Esophagus muscularis mucosa (tissue), 4 donors: ENCODE measurements at regions of chr20 and their contacts with region 1.

Region 1: DNA sequence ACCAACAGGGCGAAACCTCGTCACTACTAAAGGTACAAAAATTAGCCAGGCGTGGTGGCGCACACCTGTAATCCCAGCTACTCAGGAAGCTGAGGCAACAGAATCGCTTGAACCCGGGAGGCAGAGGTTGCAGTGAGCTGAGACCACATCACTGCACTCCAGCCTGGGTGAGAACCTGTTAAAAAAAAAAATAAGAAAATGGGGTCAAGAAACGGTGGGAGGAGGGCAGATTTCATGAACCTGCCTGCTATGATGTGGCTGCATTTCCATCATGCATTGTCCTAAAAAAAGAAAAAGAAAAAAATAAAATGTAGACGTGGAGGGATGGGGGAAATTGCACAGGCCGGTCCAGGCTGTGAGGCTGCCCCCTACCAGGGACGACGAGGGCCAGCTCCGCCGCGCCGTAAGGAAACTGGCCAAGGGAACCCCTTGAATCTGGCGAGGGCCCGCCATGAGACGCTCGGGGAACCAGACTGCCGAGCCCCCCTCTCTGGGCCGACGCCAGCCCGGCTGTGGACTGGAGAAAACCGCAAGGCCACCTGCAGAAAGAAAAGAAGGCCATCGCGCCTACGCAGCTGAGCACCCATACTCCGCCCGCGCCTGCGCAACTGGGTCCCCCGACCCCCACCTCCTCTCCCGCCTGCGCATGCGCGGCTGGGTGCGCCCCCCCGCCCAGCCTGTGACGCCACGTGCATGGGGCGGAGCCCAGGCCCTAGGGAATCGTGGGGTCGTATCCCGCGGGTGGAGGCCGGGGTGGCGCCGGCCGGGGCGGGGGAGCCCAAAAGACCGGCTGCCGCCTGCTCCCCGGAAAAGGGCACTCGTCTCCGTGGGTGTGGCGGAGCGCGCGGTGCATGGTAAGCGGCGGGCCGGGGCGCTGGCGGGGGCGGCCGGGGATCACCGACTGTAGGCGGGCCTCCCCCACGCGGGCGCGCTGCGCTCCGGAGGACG is at the start of gene ENTPD6:
- DNase-seq: peak; percentile 97
- H3K4me3 ChIP-seq: peak within 1 kb of the TSS; percentile 79 to 95 (median 94)
- H3K27ac ChIP-seq: peak within 1 kb of the TSS; percentile 84 to 94 (median 89)
- H3K4me1 ChIP-seq: peaks cover 39 to 55% (median 50%) of the 10 kb centered on the region in 4 donors
- H3K27me3 ChIP-seq: no peaks in the 10 kb centered on the region
- CTCF ChIP-seq: peak in 2 of 3 experiments; percentile 29 to 42
- EP300 ChIP-seq: no peak
- POLR2A ChIP-seq: peak; percentile 64
- total RNA-seq, gene ENTPD6: 39.0 to 44.1 (median 43.5) TPM

Region 2: GRCh38 chr20:25148181-25148981 is 46.9 kb before region 1 on chr20:
- intact Hi-C with region 1: no loop called
- DNase-seq: no peak
- H3K4me3 ChIP-seq: peak overlapping the region; percentile 45 to 57 (median 50)
- H3K27ac ChIP-seq: no peak overlapping the region
- H3K4me1 ChIP-seq: peaks cover 8 to 18% (median 12%) of the 10 kb centered on the region in 4 donors
- H3K27me3 ChIP-seq: peaks cover 0 to 31% (median 2%) of the 10 kb centered on the region in 4 donors
- CTCF ChIP-seq: no peak
- EP300 ChIP-seq: no peak
- POLR2A ChIP-seq: no peak

Region 3: DNA sequence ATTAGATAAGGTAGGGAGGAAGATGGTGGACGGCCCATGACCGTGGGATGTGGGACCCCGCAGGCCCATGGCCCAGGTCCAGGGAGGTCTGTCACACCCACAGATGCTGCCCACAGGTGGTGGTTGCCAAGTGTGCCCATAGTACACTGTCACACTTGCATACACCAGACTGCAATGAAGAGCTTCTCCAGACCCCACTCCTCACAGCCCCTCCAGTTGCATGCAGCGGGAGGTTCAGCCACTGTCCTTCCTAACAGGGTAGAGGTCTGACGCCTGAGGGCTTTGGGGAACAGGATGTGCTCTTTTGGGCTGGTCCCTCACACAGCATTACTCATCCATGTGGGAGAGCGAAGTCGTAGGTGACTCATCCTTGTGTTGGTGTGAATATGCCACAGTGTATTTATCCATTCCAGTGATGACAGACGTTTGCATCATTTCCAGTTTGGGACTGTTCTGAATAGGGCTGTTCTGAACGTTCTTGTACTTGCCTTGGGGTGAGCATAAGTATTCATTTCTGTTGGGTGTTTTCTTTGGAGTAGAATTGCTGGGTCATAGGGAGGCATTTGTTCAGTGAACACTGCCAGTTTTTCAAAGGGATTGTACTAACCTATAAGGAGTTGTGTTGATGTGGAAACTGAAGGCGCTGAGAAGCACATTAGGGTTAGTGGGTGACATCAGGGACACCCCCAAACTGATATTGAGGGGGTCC is 42.5 kb after region 1 on chr20:
- intact Hi-C with region 1: no loop called
- DNase-seq: peak; percentile 94
- H3K4me3 ChIP-seq: no peak overlapping the region
- H3K27ac ChIP-seq: peak overlapping the region; percentile 84 to 92 (median 88)
- H3K4me1 ChIP-seq: peaks cover 25 to 68% (median 60%) of the 10 kb centered on the region in 4 donors
- H3K27me3 ChIP-seq: no peaks in the 10 kb centered on the region
- CTCF ChIP-seq: no peak
- EP300 ChIP-seq: peak; percentile 98
- POLR2A ChIP-seq: no peak

Region 4: DNA sequence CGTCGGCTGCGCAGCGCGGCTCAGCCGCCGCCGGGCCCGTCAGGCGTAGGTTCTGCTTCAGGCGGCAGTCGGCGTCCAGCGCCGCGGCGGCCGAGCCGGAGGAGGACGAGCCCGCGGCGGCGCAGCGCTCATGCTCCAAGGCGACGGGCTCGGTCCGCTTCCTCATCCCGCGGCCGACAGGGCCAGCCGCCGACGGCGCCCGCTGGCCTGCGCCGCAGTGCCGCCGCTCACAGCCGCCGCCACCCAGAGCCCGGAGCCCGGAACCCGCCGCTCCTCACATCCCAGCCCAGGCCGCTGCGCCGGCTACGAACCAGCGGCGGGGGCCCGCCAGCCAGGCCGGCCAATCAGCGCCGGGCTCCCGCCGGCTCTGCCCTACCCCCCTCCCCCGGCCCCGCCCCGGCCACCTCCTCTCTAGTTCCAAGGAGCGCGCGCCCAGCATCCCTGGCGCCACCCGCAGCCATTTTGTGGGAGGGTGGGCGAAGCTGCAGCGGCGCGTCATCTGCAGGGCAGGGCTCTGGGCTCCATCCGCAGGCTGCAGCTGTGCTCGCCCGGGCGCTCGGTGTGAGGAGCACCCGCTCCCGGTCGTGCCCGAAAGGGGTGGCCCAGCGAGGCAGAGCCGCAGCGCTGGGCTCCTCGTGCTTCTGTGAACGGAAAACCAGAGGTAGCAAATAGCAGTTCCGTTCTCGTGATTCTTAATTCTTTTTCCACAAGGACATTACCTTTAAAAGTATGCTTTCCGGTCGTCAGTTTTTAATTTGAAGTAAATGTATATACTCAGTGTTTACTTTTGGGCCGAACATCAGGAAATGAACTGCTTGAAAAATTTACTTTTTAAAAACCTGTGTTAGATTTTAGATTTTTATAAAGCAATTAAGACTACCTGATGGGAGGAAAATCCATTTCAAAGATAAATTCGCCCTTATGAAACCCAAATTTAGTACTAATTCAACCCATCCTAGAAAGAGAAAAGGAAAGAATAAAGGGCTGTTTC is 195.5 kb after region 1 on chr20 and contains the start of gene ABHD12:
- intact Hi-C with region 1: loop called (anchors 5 kb)
- DNase-seq: peak; percentile 99
- H3K4me3 ChIP-seq: peak within 1 kb of the TSS; percentile 77 to 92 (median 90)
- H3K27ac ChIP-seq: peak within 1 kb of the TSS; percentile 92 to 98 (median 94)
- H3K4me1 ChIP-seq: peaks cover 4 to 20% (median 19%) of the 10 kb centered on the region in 4 donors
- H3K27me3 ChIP-seq: no peaks in the 10 kb centered on the region
- CTCF ChIP-seq: no peak
- EP300 ChIP-seq: no peak
- POLR2A ChIP-seq: no peak
- total RNA-seq, gene ABHD12: 27.0 to 41.6 (median 35.4) TPM

Region 5: GRCh38 chr20:25496968-25497640 is 301.8 kb after region 1 on chr20:
- intact Hi-C with region 1: no loop called
- DNase-seq: no peak
- H3K4me3 ChIP-seq: no peak overlapping the region
- H3K27ac ChIP-seq: no peak overlapping the region
- H3K4me1 ChIP-seq: no peaks in the 10 kb centered on the region
- H3K27me3 ChIP-seq: no peaks in the 10 kb centered on the region
- CTCF ChIP-seq: no peak
- EP300 ChIP-seq: no peak
- POLR2A ChIP-seq: no peak